CD4-positive, alpha-beta memory T cell (primary cell): ENCODE measurements at regions of chr11 and their contacts with region 1.

Region 1: DNA sequence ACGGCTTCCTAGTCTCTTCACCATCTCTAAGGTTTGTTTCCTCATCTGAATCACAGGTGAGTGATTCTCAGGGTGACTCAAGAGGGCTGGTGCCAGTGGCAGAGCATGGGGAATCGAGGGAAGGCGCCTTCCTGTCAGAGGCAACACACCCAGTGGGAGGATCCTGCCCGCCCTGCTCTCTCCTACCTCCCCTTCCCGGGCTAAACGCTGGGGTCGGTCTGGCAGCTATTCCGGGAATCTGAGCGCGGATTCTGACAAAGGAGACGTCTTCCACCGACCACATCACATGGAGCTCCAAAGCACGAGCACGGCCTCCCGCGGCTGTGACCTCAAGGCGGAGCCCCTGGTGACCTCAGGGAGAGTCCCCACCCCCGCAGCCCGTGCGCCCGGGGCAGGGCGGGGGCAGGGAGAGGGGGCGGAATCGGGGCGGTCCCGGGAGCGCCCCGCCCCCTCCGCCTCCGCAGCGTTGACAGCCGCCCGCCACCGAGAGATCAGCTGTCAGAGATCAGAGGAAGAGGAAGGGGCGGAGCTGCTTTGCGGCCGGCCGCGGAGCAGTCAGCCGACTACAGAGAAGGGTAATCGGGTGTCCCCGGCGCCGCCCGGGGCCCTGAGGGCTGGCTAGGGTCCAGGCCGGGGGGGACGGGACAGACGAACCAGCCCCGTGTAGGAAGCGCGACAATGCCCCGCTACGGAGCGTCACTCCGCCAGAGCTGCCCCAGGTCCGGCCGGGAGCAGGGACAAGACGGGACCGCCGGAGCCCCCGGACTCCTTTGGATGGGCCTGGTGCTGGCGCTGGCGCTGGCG is at the start of gene SMPD1:
- DNase-seq: peak; percentile 91 to 96 (median 92)
- H3K4me3 ChIP-seq: peak within 1 kb of the TSS; percentile 79 to 97
- H3K4me3 Mint-ChIP-seq: peak within 1 kb of the TSS; percentile 93 to 98 (median 95)
- H3K27ac ChIP-seq: peak within 1 kb of the TSS; percentile 83
- H3K27ac Mint-ChIP-seq: peak within 1 kb of the TSS; percentile 98 to 100 (median 99)
- H3K4me1 ChIP-seq: peaks cover 50% of the 10 kb centered on the region
- H3K4me1 Mint-ChIP-seq: peaks cover 24 to 61% (median 44%) of the 10 kb centered on the region in 4 donors
- H3K27me3 ChIP-seq: no peaks in the 10 kb centered on the region
- H3K27me3 Mint-ChIP-seq: no peaks in the 10 kb centered on the region
- total RNA-seq, gene SMPD1: 39.3 to 43.6 TPM

Region 2: GRCh38 chr11:6298605-6299004 is 91.5 kb before region 1 on chr11:
- CTCF ChIA-PET with region 1: no interaction called
- POLR2A ChIA-PET with region 1: no interaction called
- intact Hi-C with region 1: no loop called
- DNase-seq: no peak
- H3K4me3 ChIP-seq: no peak overlapping the region
- H3K4me3 Mint-ChIP-seq: no peak overlapping the region
- H3K27ac ChIP-seq: no peak overlapping the region
- H3K27ac Mint-ChIP-seq: no peak overlapping the region
- H3K4me1 ChIP-seq: no peaks in the 10 kb centered on the region
- H3K4me1 Mint-ChIP-seq: no peaks in the 10 kb centered on the region
- H3K27me3 ChIP-seq: no peaks in the 10 kb centered on the region
- H3K27me3 Mint-ChIP-seq: peaks cover 3 to 7% of the 10 kb centered on the region in 2 donors

Region 3: DNA sequence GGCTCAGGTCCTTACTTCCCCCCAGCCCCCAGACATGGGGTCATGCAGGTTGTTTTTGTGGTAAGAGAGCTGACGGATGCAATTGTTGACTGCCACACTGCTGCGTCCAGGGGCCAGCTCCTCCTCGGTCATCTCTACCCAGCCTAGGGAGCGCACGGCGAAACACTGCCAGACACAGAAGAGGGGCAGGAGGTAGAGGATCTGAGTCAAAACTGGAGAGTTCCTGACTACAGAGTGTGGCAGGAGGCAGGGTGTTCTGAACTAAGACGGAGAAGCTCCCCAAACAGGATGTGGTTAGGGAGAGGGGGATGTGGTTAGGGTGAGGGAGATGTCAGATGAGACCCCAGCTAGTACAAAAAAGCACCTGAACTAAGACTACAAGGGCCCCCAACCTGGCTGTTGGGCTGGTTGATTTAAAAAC is 12.4 kb after region 1 on chr11:
- CTCF ChIA-PET with region 1: interaction called, 40 read pairs
- POLR2A ChIA-PET with region 1: interaction called, 273 read pairs
- intact Hi-C with region 1: loop called (anchors 1 kb)
- DNase-seq: peak; percentile 89 to 95 (median 90)
- H3K4me3 ChIP-seq: peak overlapping the region; percentile 40 to 53
- H3K4me3 Mint-ChIP-seq: peak overlapping the region; percentile 80 to 98 (median 84)
- H3K27ac ChIP-seq: peak overlapping the region; percentile 69
- H3K27ac Mint-ChIP-seq: peak overlapping the region; percentile 96 to 99 (median 97)
- H3K4me1 ChIP-seq: peaks cover 72% of the 10 kb centered on the region
- H3K4me1 Mint-ChIP-seq: peaks cover 62 to 98% (median 80%) of the 10 kb centered on the region in 4 donors
- H3K27me3 ChIP-seq: no peaks in the 10 kb centered on the region
- H3K27me3 Mint-ChIP-seq: no peaks in the 10 kb centered on the region

Region 4: GRCh38 chr11:6413791-6414201 is 23.7 kb after region 1 on chr11:
- CTCF ChIA-PET with region 1: interaction called, 22 read pairs
- POLR2A ChIA-PET with region 1: interaction called, 503 read pairs
- intact Hi-C with region 1: loop called (anchors 1 kb)
- DNase-seq: peak; percentile 66 to 82 (median 73)
- H3K4me3 ChIP-seq: peak overlapping the region in 1 of 2 donors; percentile 18
- H3K4me3 Mint-ChIP-seq: no peak overlapping the region
- H3K27ac ChIP-seq: peak overlapping the region; percentile 13
- H3K27ac Mint-ChIP-seq: no peak overlapping the region
- H3K4me1 ChIP-seq: peaks cover 71% of the 10 kb centered on the region
- H3K4me1 Mint-ChIP-seq: peaks cover 17 to 21% (median 20%) of the 10 kb centered on the region in 4 donors
- H3K27me3 ChIP-seq: no peaks in the 10 kb centered on the region
- H3K27me3 Mint-ChIP-seq: no peaks in the 10 kb centered on the region

Region 5: DNA sequence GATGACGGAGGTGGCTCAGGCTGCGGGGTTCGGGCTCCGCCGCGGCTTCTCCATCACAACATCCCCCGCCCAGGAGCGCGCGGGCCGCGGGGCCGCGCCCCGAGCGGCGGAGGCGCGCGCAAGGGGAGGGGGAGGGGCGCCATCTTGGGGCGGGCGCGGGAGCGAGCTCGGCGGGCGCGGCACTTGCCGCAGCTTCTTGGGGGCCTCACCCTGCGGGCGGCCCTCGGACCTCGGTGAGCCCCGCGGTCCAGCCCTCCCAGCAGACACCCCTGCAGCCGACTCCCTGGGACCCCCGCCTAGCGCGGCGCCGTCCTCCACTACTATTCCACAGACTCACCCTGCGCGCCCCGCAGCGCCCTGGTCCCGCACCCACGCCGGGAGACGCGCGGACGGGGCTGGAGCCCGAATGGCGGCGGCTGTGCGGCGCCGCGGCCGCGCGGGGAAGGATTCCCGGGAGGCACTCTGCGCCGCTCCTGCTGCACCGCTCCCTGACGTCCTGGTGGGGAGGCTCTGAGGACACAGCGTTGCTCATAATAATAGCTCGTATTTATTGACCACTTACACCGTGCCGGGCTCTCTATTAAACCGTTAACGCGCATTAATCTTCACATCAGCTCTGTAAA is 29.0 kb after region 1 on chr11 and contains the start of gene APBB1:
- CTCF ChIA-PET with region 1: interaction called, 22 read pairs
- POLR2A ChIA-PET with region 1: interaction called, 503 read pairs
- intact Hi-C with region 1: loop called (anchors 1 kb)
- DNase-seq: peak; percentile 67 to 81 (median 79)
- H3K4me3 ChIP-seq: peak within 1 kb of the TSS; percentile 43 to 74
- H3K4me3 Mint-ChIP-seq: peak within 1 kb of the TSS in 6 of 8 donors; percentile 81 to 89 (median 86)
- H3K27ac ChIP-seq: peak within 1 kb of the TSS; percentile 73
- H3K27ac Mint-ChIP-seq: peak within 1 kb of the TSS; percentile 74 to 90 (median 84)
- H3K4me1 ChIP-seq: peaks cover 50% of the 10 kb centered on the region
- H3K4me1 Mint-ChIP-seq: peaks cover 5 to 12% (median 8%) of the 10 kb centered on the region in 4 donors
- H3K27me3 ChIP-seq: no peaks in the 10 kb centered on the region
- H3K27me3 Mint-ChIP-seq: peaks cover 6 to 15% of the 10 kb centered on the region in 2 donors
- total RNA-seq, gene APBB1: 93.2 to 93.5 TPM

Region 6: DNA sequence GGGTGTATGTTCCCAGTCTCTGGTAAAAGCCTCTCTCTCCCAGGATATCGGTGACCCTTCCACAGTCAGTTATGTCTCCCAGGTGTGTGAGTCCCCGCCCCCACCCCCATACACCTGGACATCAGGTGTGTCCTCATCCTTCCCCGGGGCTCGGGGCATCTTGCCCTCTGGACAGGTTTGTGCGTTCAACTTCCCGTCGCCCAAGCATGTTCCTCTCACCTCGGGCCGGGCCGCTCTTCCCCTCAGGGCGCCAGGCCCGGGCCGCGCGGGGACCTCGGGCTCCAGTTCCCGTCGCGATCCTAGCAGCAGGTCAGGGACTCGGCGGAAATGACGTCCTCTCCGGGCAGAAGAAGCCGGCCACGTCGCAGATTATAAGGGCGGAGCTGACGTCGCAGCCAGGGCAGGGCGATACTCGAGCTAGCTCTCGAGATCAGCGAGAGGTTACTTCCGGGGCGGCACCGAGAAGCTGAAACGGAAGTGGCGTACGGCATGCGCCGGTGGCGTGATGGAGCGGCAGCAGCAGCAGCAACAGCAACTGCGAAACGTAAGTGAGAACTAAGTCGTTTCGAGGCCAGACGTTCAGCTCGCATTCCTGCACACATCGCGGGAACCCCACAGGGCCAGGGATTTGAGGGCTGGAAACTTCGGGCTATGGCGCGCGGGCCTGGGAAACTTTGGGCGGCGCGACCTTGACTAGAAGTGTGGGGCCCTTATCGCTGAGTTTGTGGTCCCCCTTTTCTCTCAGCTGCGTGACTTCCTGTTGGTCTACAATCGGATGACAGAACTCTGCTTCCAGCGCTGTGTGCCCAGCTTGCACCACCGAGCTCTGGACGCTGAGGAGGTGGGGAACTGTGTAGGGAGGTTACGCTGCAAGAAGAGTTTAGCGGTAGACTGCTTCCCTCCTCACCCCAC is 91.1 kb after region 1 on chr11 and contains the starts of genes ARFIP2 and TIMM10B:
- CTCF ChIA-PET with region 1: no interaction called
- POLR2A ChIA-PET with region 1: interaction called, 8 read pairs
- intact Hi-C with region 1: loop called (anchors 1 kb)
- DNase-seq: peak; percentile 93 to 98 (median 95)
- H3K4me3 ChIP-seq: peak within 1 kb of the TSS; percentile 83 to 97
- H3K4me3 Mint-ChIP-seq: peak within 1 kb of the TSS; percentile 93 to 98 (median 96)
- H3K27ac ChIP-seq: peak within 1 kb of the TSS; percentile 90
- H3K27ac Mint-ChIP-seq: peak within 1 kb of the TSS; percentile 95 to 99 (median 98)
- H3K4me1 ChIP-seq: peaks cover 46% of the 10 kb centered on the region
- H3K4me1 Mint-ChIP-seq: peaks cover 26 to 44% (median 36%) of the 10 kb centered on the region in 4 donors
- H3K27me3 ChIP-seq: no peaks in the 10 kb centered on the region
- H3K27me3 Mint-ChIP-seq: no peaks in the 10 kb centered on the region
- total RNA-seq, gene ARFIP2: 53.9 to 56.9 TPM
- total RNA-seq, gene TIMM10B: 54.7 to 60.3 TPM

Region 7: DNA sequence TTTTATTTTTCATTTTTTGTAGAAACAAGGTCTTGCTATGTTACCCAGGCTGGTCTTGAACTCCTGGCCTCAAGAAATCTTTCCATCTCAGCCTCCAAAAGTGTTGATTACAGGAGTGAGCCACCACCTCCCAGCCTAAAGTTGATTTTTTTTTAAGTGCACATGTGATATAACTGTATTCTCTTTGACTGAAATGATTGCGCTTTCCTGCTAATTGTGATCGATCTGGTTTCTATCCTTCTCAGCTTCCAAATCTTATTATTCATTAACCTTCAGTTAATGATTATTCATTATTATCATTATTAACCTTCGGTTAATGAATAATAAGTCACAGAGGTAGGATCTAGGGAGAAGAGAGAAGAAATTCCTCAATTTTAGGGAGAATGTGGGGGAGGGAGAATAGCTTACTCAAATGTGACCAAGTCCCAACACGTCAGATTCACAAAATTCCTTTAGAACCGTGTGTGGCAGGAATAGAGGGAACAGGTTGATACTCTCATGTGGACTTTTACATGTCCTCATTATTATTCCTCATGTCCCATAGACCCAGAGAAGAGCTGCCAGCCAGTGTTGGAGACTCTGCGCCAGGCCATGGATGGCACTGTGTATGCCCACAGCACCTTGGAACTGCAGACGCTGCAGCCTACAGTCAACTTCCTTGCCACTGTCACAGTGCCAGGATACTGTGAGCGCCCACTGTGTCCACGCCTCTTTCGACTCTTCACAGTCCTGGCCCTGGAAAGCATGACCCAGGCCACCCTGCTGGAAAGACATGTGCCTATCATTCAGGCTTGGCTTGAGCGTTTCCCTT is 166.2 kb after region 1 on chr11:
- CTCF ChIA-PET with region 1: no interaction called
- POLR2A ChIA-PET with region 1: no interaction called
- intact Hi-C with region 1: no loop called
- DNase-seq: no peak
- H3K4me3 ChIP-seq: no peak overlapping the region
- H3K4me3 Mint-ChIP-seq: no peak overlapping the region
- H3K27ac ChIP-seq: no peak overlapping the region
- H3K27ac Mint-ChIP-seq: no peak overlapping the region
- H3K4me1 ChIP-seq: no peaks in the 10 kb centered on the region
- H3K4me1 Mint-ChIP-seq: no peaks in the 10 kb centered on the region
- H3K27me3 ChIP-seq: no peaks in the 10 kb centered on the region
- H3K27me3 Mint-ChIP-seq: no peaks in the 10 kb centered on the region